Activated CD8-positive, alpha-beta T cell treated with anti-CD3 and anti-CD28 coated beads, Interleukin-2, amount 10 ng/mL, durations not matched to agents 7 days and 5 days (primary cell): ENCODE measurements at regions of chr11 and their contacts with region 1.

Region 1: DNA sequence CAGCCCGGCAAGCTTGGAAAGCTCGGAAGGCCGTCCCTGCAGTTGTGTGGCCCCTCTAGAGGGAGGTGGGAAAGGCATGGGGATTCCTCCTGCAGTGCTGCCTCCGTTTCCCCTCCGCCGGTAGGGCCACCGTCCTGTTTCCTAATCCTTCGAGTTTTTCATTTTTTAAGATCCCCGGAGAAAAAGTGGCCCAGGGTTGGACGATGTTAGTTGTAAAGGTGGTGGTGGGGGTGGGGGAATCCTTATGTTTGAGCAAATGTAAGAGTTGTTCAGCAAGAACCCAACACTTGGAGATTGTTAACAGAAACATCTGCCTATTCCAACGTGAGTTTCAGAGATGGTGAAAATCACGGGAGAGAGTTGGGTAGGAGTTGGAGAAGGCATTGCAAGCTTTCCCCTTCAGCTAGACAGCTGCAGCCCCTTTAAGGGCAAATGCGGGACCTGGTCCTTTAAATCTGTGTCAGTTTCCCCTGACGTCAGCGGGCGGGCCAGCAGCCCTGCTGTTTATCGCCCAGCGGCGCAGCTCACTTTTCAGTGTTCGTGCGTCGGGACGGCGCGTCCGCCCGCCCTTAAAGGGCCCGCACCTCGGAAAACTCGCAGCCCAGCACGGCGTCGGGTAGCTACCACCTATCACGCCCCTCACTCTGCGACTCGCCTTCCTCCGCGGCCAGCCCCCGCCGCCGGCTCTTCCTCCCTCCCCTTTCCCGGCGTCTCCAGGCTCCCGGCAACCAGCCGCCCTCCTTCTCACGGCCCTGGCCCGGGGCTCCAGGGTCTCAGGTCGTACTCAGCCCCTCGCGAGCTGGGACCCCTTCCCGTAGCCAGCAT is at the start of gene SIDT2:
- DNase-seq: peak; percentile 95
- ATAC-seq: peak; percentile 98
- H3K4me3 Mint-ChIP-seq: peak within 1 kb of the TSS; percentile 91
- H3K27ac Mint-ChIP-seq: peak within 1 kb of the TSS; percentile 88
- H3K4me1 Mint-ChIP-seq: peaks cover 36% of the 10 kb centered on the region
- H3K27me3 Mint-ChIP-seq: no peaks in the 10 kb centered on the region
- total RNA-seq, gene SIDT2: 20.2 to 23.6 TPM

Region 2: GRCh38 chr11:117143871-117144476 is 34.4 kb before region 1 on chr11 and contains the start of gene PAFAH1B2:
- CTCF ChIA-PET with region 1: interaction called, 32 read pairs
- POLR2A ChIA-PET with region 1: interaction called, 32 read pairs
- DNase-seq: peak; percentile 97
- ATAC-seq: peak; percentile 95
- H3K4me3 Mint-ChIP-seq: peak within 1 kb of the TSS; percentile 92
- H3K27ac Mint-ChIP-seq: peak within 1 kb of the TSS; percentile 92
- H3K4me1 Mint-ChIP-seq: peaks cover 42% of the 10 kb centered on the region
- H3K27me3 Mint-ChIP-seq: peaks cover 21% of the 10 kb centered on the region
- total RNA-seq, gene PAFAH1B2: 56.5 to 60.0 TPM

Region 3: DNA sequence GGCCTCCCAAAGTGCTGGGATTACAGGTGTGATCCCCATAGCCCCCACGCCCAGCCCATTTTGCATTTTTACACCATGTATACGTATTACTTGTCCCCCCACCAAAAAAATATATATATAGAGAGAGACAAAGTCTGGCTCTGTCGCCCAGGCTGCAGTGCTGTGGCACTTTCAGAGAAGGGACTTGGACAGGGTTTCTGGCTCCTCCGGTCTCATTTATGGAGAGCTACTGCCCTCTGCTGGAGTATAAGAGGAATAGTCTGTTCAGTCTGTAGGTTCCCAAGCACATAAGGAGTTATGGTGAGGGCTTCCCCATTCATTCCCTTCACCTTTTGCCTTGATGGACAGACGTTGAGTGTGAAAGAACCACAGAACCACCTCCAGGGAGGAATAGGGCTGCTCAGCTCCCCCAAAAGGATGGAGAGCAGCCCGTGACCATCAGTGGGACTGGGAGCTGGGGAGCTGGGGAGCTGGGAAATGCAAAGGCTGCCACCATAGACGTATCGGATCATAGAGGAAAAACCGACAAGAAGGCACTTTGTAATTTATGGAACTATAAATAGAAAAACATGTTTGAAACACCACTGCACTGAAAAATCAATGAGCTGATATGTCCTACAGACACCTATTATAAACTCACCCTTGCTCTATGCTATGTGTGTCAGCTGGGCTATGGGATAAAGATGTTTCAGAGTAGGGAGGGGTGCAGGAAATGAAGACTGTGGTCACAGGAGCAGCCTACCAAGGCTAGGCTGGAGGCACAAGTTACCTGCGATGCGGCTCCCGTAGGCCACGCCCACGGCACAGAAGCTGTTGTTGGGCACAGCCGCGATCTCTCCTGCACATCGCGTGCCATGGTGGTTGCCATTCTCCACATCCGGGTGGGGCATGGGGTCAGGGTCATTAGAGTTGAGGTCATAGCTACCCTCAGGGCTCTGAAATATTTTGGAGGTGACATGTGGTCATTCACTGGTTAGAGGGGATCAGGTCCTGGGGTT is 48.3 kb after region 1 on chr11:
- CTCF ChIA-PET with region 1: interaction called, 124 read pairs
- POLR2A ChIA-PET with region 1: interaction called, 14 read pairs
- DNase-seq: peak; percentile 64
- ATAC-seq: peak; percentile 55
- H3K4me3 Mint-ChIP-seq: no peak overlapping the region
- H3K27ac Mint-ChIP-seq: peak overlapping the region; percentile 20
- H3K4me1 Mint-ChIP-seq: peaks cover 37% of the 10 kb centered on the region
- H3K27me3 Mint-ChIP-seq: no peaks in the 10 kb centered on the region

Region 4: GRCh38 chr11:117232092-117232878 is 53.9 kb after region 1 on chr11 and contains the start of gene RNF214:
- CTCF ChIA-PET with region 1: interaction called, 124 read pairs
- POLR2A ChIA-PET with region 1: interaction called, 14 read pairs
- DNase-seq: peak; percentile 79
- ATAC-seq: peak; percentile 77
- H3K4me3 Mint-ChIP-seq: peak within 1 kb of the TSS; percentile 89
- H3K27ac Mint-ChIP-seq: peak within 1 kb of the TSS; percentile 97
- H3K4me1 Mint-ChIP-seq: peaks cover 43% of the 10 kb centered on the region
- H3K27me3 Mint-ChIP-seq: no peaks in the 10 kb centered on the region
- total RNA-seq, gene RNF214: 19.5 to 21.2 TPM